ENCODE measurements at regions of chr2 and their contacts with region 1.

Region 1: GRCh38 chr2:85390941-85391669 is 19.1 kb downstream of the CAPG start:
- DNase-seq: peak; percentile 54
- H3K4me3 Mint-ChIP-seq: no peak overlapping the region
- H3K27ac Mint-ChIP-seq: no peak overlapping the region
- H3K4me1 Mint-ChIP-seq: peaks cover 4% of the 10 kb centered on the region
- H3K27me3 Mint-ChIP-seq: no peaks in the 10 kb centered on the region

Region 2: GRCh38 chr2:85551698-85552678 is 160.9 kb after region 1 on chr2:
- intact Hi-C with region 1: loop called (anchors 1 kb)
- DNase-seq: peak; percentile 80
- H3K4me3 Mint-ChIP-seq: no peak overlapping the region
- H3K27ac Mint-ChIP-seq: no peak overlapping the region
- H3K4me1 Mint-ChIP-seq: peaks cover 3% of the 10 kb centered on the region
- H3K27me3 Mint-ChIP-seq: no peaks in the 10 kb centered on the region

Measured in activated T-helper 2 cell treated with anti-CD3 and anti-CD28 coated beads, Interferon-gamma antibody, Interleukin-2, Interleukin-4, amounts not matched to agents 10 μg/mL and 5 μg/mL and 100 μg/mL, durations not matched to agents 14 hours and 24 hours and 36 hours (primary cell).